ENCODE measurements at regions of chr2 and their contacts with region 1.

Region 1: DNA sequence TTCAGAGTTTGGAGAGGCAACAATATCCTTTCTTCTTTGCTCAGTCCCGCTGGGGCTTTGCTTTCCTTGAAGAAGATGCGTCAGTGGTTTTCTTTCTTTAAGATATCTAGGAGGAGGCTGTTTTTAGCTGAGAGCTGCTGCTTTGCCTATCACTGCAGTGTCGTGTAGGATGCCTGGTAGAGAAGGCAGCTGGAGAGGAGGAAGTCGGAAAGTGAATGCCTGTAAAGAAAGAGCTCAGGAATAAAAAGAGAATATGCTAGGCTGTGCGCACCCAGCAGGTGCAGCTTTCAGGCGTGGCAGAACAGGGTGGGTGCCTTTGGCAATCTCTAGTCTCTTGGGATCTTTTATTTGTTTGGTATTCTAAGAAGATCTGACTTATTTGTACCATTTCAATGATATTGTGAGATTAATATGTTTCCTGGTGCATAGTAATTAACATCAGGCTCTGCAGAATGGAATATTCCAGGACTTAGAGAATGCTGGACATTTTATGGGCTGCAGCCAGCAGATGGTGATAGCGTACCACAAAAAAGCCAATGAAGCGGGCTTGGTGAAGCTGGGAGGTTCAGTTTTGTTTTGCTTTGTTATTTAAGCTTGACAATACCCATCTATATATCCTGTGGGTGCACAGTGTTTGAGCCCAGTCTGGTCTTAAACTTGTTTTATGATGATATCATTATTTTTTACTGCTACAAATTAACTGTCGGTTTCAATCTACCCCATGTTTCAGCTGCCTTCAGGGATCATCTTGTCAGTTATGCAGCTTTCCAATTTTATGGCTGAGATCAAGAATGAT is 34.9 kb downstream of the CAVIN2 start:
- DNase-seq: peak in 2 of 3 donors; percentile 64 to 75
- ATAC-seq: peak; percentile 75
- H3K4me3 ChIP-seq: no peak overlapping the region
- H3K4me1 ChIP-seq: no peaks in the 10 kb centered on the region
- CTCF ChIP-seq: peak; percentile 40

Region 2: GRCh38 chr2:191555092-191555742 is 256.8 kb before region 1 on chr2:
- intact Hi-C with region 1: loop called in 1 of 2 experiments (anchors 10 kb)
- DNase-seq: peak in 2 of 3 donors; percentile 83 to 96
- ATAC-seq: peak; percentile 97
- H3K4me3 ChIP-seq: no peak overlapping the region
- H3K4me1 ChIP-seq: peaks cover 6% of the 10 kb centered on the region
- CTCF ChIP-seq: peak; percentile 43

Region 3: GRCh38 chr2:191995285-191995684 is 183.3 kb after region 1 on chr2:
- intact Hi-C with region 1: no loop called
- DNase-seq: no peak
- ATAC-seq: no peak
- H3K4me3 ChIP-seq: no peak overlapping the region
- H3K4me1 ChIP-seq: no peaks in the 10 kb centered on the region
- CTCF ChIP-seq: no peak

Region 4: GRCh38 chr2:192162392-192163042 is 350.5 kb after region 1 on chr2:
- intact Hi-C with region 1: loop called (anchors 2 to 5 kb)
- DNase-seq: peak in 1 of 3 donors; percentile 91
- ATAC-seq: peak; percentile 88
- H3K4me3 ChIP-seq: no peak overlapping the region
- H3K4me1 ChIP-seq: no peaks in the 10 kb centered on the region
- CTCF ChIP-seq: peak; percentile 70

Measured in mucosa of descending colon (tissue), 3 donors.